Activated CD4-positive, alpha-beta T cell treated with anti-CD3 and anti-CD28 coated beads, Interleukin-2, amount 10 ng/mL, durations not matched to agents 24 days and 14 days (primary cell): ENCODE measurements at regions of chr6 and their contacts with region 1.

Region 1: DNA sequence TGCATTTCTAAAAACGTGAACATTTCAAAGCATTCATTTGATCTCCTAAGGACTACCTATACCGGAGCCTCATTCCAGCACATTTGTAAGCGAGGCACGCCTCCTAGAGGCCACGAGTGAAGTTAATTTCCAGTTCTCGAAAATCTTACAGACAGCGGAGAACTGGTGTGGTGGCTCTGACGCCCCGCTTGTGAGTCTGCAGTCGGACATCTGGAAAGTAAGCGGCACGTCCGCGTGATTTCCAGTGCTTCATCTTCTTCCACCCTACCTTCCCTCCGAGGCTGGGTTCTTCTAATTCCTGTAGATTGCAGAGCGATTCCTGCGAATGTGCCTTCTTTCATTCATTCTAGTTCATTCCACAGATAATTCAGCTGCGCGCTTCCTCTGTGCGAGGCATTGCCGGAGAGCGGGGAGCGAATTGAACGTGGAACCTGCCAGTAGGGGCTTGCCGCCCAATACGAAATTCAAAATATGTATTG is 810 bp upstream of the PRIM2 start:
- DNase-seq: peak; percentile 95
- H3K4me3 Mint-ChIP-seq: peak overlapping the region; percentile 99
- H3K27ac Mint-ChIP-seq: peak overlapping the region; percentile 93
- H3K4me1 Mint-ChIP-seq: peaks cover 26% of the 10 kb centered on the region
- H3K27me3 Mint-ChIP-seq: peaks cover 4% of the 10 kb centered on the region

Region 2: DNA sequence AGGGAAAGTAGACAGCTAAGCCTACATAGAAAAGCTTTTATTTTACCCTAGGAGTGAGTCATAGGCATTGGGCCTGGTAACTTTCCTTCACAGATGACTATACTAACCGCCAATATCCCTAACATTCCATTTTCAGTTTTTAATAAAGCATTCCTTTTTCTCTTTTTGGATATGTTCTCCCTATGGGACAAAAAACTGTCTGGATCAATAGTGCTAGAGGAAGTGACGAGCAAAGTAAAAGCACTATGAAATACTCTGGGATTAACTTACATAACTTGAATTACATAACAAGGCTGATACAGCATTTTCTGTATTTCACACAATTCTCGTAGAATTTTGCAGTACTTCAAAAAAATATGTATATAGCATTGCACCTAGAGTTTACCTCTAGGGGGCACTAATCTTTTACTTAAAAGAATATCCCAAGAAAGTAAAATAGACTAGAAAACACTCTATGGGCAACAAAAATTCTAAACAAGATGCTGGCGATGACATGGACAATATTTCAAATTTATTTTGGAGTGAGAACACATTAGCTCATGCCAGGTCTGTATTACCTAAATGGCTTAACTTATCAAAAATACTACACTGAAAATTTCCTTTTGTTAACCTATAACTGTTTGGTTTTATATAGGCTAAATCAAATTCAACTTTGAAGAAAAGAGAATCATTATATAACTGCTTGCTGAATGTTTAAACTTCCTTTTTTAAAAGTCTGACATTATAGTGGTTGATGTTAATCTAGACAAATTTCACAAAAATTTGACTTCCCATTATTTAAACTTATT is 607.6 kb before region 1 on chr6:
- intact Hi-C with region 1: loop called (anchors 10 kb)
- DNase-seq: peak; percentile 42
- H3K4me3 Mint-ChIP-seq: no peak overlapping the region
- H3K27ac Mint-ChIP-seq: no peak overlapping the region
- H3K4me1 Mint-ChIP-seq: no peaks in the 10 kb centered on the region
- H3K27me3 Mint-ChIP-seq: peaks cover 8% of the 10 kb centered on the region

Region 3: GRCh38 chr6:56902641-56903464 is 413.8 kb before region 1 on chr6:
- intact Hi-C with region 1: loop called (anchors 1 kb)
- DNase-seq: no peak
- H3K4me3 Mint-ChIP-seq: no peak overlapping the region
- H3K27ac Mint-ChIP-seq: no peak overlapping the region
- H3K4me1 Mint-ChIP-seq: peaks cover 2% of the 10 kb centered on the region
- H3K27me3 Mint-ChIP-seq: peaks cover 17% of the 10 kb centered on the region

Region 4: DNA sequence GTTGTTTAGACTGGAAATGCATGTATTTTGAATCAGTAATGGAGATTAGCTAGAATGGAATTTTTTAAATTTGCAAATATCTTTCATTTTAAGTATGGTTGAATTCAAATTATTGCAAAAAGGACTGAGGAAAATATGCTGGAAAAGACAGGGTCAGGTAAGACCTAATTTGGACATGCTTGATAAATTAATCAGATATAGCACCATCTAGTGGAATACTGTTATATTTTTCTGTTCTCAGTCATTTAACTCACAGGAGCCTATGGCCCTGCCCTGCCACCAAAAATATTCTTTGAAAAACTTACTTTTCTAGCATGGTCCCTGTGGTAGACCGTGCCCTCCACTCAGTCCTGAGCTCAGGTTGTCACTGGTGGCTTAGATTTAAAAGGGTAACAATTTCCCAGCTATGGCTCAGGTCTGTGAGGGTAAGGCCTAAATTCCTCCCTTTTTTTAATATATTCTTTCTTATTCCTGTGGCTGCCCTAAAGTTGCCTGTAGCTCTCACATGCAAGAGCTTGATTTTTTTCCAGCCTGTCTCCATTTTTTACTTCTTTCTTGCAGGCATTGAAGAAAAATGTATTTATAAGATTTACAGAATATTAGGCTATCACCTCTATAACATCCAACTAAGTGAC is 295.4 kb before region 1 on chr6:
- intact Hi-C with region 1: loop called (anchors 2 kb)
- DNase-seq: no peak
- H3K4me3 Mint-ChIP-seq: no peak overlapping the region
- H3K27ac Mint-ChIP-seq: no peak overlapping the region
- H3K4me1 Mint-ChIP-seq: no peaks in the 10 kb centered on the region
- H3K27me3 Mint-ChIP-seq: peaks cover 19% of the 10 kb centered on the region

Region 5: DNA sequence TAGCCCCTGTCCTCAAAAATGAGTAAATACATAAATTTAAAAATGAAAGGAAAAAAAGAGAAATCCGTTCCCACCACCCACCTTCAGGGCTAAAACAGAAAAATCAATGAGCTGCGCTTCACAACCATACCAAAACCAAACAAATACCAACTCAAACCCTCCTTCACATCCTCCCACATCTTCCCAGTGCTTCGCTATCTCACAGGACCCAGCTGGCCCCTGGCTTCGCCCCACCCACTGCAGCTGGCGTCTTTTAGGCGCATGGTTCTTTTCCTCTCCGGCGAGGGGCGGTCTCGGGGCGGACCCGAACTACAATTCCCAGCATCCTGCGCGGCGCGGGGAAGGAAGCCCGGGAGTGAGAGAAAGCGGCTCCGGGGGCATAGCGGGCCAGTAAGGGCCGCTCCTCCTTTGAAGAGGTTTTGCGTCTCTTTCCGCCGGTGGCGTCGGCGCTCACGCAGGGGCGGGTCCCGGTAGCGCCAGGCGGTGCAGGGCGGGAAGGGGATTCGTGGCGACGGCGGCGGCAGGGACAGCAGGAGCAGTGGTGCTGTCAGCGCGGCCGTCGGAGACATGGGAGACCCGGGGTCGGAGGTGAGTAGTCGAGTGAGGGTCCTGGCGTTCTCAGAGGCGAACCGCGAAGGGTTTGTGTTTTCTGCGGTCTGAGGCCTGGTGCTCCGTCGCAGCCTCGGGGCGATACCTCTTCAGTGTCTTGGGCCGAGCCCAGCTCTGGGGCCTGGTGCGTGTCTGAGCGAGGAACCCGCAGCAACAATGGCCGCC is 226.7 kb before region 1 on chr6 and contains the start of gene ZNF451:
- intact Hi-C with region 1: loop called (anchors 1 kb)
- DNase-seq: peak; percentile 99
- H3K4me3 Mint-ChIP-seq: peak within 1 kb of the TSS; percentile 70
- H3K27ac Mint-ChIP-seq: peak within 1 kb of the TSS; percentile 70
- H3K4me1 Mint-ChIP-seq: peaks cover 27% of the 10 kb centered on the region
- H3K27me3 Mint-ChIP-seq: no peaks in the 10 kb centered on the region
- total RNA-seq, gene ZNF451: 58.1 and 61.2 TPM in 2 replicates

Region 6: DNA sequence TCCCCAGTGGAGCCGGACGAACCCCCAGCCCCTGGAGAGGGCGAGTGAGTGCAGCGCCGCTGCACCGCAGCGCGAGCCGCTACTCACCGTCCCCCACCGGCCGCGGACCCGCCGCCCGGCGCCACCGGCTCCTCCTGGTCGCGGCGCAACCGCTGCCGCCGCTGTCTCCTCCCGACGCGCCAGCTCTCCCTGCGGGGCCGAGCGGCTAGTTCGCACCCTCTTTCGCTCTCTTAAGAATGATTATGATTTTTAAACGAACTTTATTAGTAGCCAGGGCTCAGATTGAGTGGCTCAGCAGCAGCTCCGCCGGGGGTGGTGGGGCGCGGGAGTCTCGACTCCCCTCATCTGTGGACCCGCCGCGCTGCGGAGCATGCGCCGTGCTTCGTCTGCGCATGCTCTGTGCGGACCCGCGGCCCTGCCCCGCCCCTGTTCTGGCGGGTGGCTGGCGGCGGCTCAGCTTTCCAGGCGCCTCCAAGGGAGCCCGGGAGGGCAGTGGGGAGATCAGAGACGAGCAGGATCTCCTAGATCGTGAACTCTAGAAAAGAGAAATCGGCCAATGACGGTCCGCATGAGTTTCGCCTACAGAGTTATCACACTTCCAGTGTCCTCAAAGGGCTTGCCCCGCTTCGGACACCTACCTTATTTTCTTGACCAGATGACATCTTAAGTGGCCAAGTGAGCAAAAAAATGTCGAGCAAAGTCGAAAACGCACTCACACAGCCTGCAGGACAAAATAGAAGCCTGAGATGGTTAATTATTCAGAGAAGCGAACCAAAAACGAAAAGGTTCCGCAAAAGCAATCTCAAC is 94.5 kb before region 1 on chr6 and contains the start of gene RAB23:
- intact Hi-C with region 1: loop called (anchors 1 kb)
- DNase-seq: peak; percentile 97
- H3K4me3 Mint-ChIP-seq: peak within 1 kb of the TSS; percentile 93
- H3K27ac Mint-ChIP-seq: peak within 1 kb of the TSS; percentile 92
- H3K4me1 Mint-ChIP-seq: peaks cover 13% of the 10 kb centered on the region
- H3K27me3 Mint-ChIP-seq: peaks cover 37% of the 10 kb centered on the region
- total RNA-seq, gene RAB23: 3.0 and 4.0 TPM in 2 replicates